HepG2 (cell line): ENCODE measurements at regions of chr1 and their contacts with region 1.

Region 1: DNA sequence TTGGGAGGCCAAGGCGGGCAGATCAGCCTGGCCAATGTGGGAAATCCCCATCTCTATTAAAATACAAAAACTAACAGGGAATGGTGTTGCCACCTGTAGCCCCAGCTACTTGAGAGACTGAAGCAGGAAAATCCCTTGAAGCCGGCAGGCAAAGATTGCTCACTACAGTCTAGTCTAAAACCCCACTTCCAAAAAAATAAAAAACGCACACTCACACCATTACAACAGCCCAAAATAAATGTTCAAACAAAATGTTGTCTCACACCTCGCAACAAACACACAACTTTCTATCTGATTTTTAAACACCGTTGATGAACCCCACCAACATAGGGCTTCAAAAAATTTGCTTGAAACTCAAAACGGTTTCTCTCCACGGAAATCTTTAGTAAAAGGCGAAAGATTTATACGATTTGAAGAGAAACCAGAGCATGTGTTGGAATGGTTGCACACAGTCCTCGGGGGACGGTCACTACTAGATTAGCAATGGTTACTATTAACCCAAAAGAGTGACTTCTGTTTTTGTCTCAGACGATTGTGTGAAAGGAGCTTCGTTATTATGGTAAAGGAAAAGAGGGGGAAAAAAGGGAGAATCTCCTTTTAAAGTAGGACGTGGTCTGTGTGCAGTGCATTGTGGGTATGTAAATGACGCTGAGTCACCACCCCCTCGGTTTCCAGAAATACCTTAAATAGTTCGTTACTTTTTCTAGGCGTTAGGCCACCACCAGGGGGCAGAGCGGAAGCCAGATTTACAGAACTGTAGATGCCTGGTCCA is at the start of gene RNU5D-1:
- DNase-seq: peak; percentile 95
- ATAC-seq: peak; percentile 82
- H3K4me3 ChIP-seq: peak within 1 kb of the TSS; percentile 45 to 62 (median 48)
- H3K27ac ChIP-seq: peak within 1 kb of the TSS; percentile 100
- H3K4me1 ChIP-seq: peaks cover 60% of the 10 kb centered on the region
- H3K27me3 ChIP-seq: no peaks in the 10 kb centered on the region; a peak in 2 of 5 replicates
- CTCF ChIP-seq: peak; percentile 79
- EP300 ChIP-seq: peak in 1 of 2 experiments; percentile 27; a peak in 1 of 4 replicates
- POLR2A ChIP-seq: peak; percentile 97 to 100
- RAD21 ChIP-seq: peak; percentile 59
- total RNA-seq, gene RNU5D-1: 165 TPM in 1 of 2 replicates, not detected in the other

Region 2: DNA sequence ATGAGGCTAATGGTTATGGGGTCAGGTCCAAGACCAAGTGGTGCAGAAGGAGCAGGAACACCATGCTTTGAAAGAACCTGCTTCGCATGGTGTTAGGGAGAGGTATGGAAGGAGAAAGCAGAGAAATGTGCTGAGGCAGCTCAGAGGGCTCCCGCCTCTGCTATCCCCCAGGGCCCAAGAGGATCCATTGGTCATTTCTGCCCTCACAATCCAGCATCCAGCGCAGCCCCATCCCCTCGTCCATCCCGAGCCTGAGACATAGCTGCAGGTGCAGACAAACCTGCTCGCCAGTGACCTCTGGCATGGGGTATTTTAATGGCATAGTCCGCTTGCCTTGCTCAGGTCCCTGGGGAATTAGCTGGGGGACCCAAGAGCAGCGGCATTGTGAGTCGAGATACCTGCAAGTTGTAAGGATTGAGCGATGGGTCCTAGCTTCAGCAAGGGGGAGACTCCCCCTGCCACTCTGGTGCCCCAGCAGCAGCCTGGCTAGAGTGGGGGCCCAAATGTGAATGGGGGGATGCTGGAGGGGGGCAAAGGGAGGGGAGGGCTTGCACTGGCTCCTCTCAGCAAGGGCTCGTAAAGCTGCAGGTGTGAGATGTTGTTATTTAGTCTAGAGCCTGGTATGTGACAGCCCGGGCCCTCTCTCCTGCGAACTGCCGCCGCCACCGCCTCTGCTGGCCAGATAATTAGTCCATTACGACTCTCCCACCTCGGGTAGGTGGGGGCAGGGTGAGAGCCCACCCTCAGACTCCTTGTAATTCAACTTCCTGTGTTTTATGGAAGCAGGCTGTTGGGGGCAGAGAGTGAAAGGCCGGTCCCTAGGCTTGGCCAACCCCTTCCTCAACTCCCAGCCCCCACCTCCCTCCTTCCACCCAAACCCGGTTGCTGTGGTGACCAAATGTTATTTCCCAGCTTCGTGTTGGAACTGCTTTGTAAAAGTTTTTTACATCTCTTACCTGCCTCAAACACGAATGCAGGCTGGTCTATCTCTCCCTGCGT is 207.0 kb before region 1 on chr1:
- CTCF ChIA-PET with region 1: no interaction called
- POLR2A ChIA-PET with region 1: no interaction called
- in situ Hi-C with region 1: no loop called
- intact Hi-C with region 1: no loop called
- DNase-seq: no peak
- ATAC-seq: no peak
- H3K4me3 ChIP-seq: no peak overlapping the region
- H3K27ac ChIP-seq: no peak overlapping the region
- H3K4me1 ChIP-seq: no peaks in the 10 kb centered on the region
- H3K27me3 ChIP-seq: no peaks in the 10 kb centered on the region
- CTCF ChIP-seq: no peak
- EP300 ChIP-seq: no peak
- POLR2A ChIP-seq: no peak
- RAD21 ChIP-seq: no peak

Region 3: GRCh38 chr1:44631333-44631646 is 99.6 kb before region 1 on chr1:
- CTCF ChIA-PET with region 1: no interaction called
- POLR2A ChIA-PET with region 1: no interaction called
- in situ Hi-C with region 1: no loop called
- intact Hi-C with region 1: no loop called
- DNase-seq: no peak
- ATAC-seq: no peak
- H3K4me3 ChIP-seq: peak overlapping the region; percentile 53 to 76 (median 66)
- H3K27ac ChIP-seq: peak overlapping the region; percentile 97
- H3K4me1 ChIP-seq: peaks cover 38% of the 10 kb centered on the region
- H3K27me3 ChIP-seq: no peaks in the 10 kb centered on the region
- CTCF ChIP-seq: no peak
- EP300 ChIP-seq: no peak
- POLR2A ChIP-seq: no peak
- RAD21 ChIP-seq: no peak

Region 4: GRCh38 chr1:44681905-44682882 is 48.7 kb before region 1 on chr1:
- CTCF ChIA-PET with region 1: no interaction called
- POLR2A ChIA-PET with region 1: interaction called, 11 read pairs
- in situ Hi-C with region 1: no loop called
- intact Hi-C with region 1: no loop called
- DNase-seq: peak; percentile 89
- ATAC-seq: peak; percentile 93
- H3K4me3 ChIP-seq: peak overlapping the region; percentile 47 to 54 (median 49); a peak in 5 of 6 replicates
- H3K27ac ChIP-seq: peak overlapping the region; percentile 87
- H3K4me1 ChIP-seq: peaks cover 89% of the 10 kb centered on the region
- H3K27me3 ChIP-seq: no peaks in the 10 kb centered on the region
- CTCF ChIP-seq: no peak; the same call in 1 of the 2 replicates
- EP300 ChIP-seq: peak; percentile 13 to 90; a peak in 3 of 4 replicates
- POLR2A ChIP-seq: peak in 1 of 2 experiments; percentile 24; a peak in 1 of 4 replicates
- RAD21 ChIP-seq: peak; percentile 31; the same call in 1 of the 2 replicates

Region 5: DNA sequence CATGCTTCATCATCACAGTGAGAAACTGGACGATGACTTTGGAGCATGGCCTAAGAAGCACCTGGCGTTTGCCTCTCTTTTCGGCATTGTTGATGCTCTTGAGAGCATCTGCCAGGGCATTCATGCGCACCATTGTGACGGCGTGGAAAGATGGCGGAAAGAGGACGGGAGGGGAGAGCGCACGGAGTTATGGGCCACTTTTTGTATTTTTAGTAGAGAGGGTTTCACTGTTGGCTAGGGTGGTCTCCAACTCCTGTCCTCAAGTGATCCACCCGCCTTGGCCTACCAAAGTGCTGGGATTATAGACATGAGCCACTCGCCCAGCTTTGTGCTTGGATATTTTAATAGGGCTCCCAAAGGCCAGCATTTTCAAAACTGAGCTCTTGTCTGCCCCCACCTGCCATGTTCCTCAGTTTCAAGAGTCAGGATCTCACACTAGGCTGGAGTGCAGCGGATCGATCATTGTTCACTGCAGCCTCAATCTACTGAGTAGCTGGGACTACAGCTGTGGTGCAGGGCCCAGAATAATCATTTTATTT is 49.7 kb after region 1 on chr1:
- CTCF ChIA-PET with region 1: interaction called, 3 read pairs
- POLR2A ChIA-PET with region 1: interaction called, 32 read pairs
- in situ Hi-C with region 1: no loop called
- intact Hi-C with region 1: loop called (anchors 5 kb)
- DNase-seq: no peak
- ATAC-seq: no peak
- H3K4me3 ChIP-seq: no peak overlapping the region
- H3K27ac ChIP-seq: no peak overlapping the region
- H3K4me1 ChIP-seq: peaks cover 51% of the 10 kb centered on the region
- H3K27me3 ChIP-seq: no peaks in the 10 kb centered on the region
- CTCF ChIP-seq: no peak
- EP300 ChIP-seq: no peak
- POLR2A ChIP-seq: peak; percentile 26 to 56; a peak in 2 of 4 replicates
- RAD21 ChIP-seq: no peak

Region 6: GRCh38 chr1:44799770-44800584 is 69.0 kb after region 1 on chr1 and contains the start of gene PLK3:
- CTCF ChIA-PET with region 1: no interaction called
- POLR2A ChIA-PET with region 1: interaction called, 12 read pairs
- in situ Hi-C with region 1: no loop called
- intact Hi-C with region 1: no loop called
- DNase-seq: peak; percentile 92
- ATAC-seq: peak; percentile 86
- H3K4me3 ChIP-seq: peak within 1 kb of the TSS; percentile 69 to 91 (median 90)
- H3K27ac ChIP-seq: peak within 1 kb of the TSS; percentile 94
- H3K4me1 ChIP-seq: peaks cover 44% of the 10 kb centered on the region
- H3K27me3 ChIP-seq: no peaks in the 10 kb centered on the region
- CTCF ChIP-seq: peak; percentile 98
- EP300 ChIP-seq: peak; percentile 13 to 54; a peak in 1 of 4 replicates
- POLR2A ChIP-seq: peak in 1 of 2 experiments; percentile 92; a peak in 2 of 4 replicates
- RAD21 ChIP-seq: peak; percentile 92
- total RNA-seq, gene PLK3: 4.5 and 9.8 TPM in 2 replicates